AG04449 (cell line): ENCODE measurements at regions of chr17 and their contacts with region 1.

Region 1: GRCh38 chr17:48307814-48308411 is 122.1 kb downstream of the SKAP1 start:
- DNase-seq: peak; percentile 17
- H3K4me3 ChIP-seq: no peak overlapping the region
- CTCF ChIP-seq: peak; percentile 85

Region 2: DNA sequence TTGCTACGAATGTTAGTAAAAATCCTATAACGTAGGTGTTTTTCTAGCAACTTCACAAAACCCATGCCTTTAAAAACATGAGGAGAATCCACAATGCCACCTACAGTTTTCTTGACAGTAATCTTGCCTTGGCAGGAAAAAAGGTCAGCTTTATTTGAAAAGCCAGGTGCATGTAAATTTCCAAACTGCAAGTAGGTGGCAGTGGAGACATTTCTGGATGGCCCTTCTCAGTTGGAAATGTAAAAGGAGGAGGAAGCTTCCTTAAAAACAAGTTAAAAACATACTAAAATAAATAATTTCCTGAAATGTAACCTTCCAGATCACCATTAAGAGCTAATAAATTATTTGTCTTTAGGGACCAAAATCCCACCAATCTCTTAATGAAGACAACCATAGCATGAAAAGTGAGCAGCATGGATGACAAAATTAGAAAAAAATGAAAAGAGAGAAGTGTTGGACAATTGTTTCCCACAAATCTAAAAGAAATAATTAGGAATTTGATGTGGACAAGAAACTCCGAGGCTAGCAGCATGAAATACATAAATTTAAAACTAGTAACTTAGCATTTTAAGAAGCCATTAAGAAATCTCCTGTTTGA is 48.1 kb before region 1 on chr17:
- CTCF ChIA-PET with region 1: interaction called, 13 read pairs
- POLR2A ChIA-PET with region 1: no interaction called
- DNase-seq: no peak
- H3K4me3 ChIP-seq: no peak overlapping the region
- CTCF ChIP-seq: peak; percentile 43

Region 3: DNA sequence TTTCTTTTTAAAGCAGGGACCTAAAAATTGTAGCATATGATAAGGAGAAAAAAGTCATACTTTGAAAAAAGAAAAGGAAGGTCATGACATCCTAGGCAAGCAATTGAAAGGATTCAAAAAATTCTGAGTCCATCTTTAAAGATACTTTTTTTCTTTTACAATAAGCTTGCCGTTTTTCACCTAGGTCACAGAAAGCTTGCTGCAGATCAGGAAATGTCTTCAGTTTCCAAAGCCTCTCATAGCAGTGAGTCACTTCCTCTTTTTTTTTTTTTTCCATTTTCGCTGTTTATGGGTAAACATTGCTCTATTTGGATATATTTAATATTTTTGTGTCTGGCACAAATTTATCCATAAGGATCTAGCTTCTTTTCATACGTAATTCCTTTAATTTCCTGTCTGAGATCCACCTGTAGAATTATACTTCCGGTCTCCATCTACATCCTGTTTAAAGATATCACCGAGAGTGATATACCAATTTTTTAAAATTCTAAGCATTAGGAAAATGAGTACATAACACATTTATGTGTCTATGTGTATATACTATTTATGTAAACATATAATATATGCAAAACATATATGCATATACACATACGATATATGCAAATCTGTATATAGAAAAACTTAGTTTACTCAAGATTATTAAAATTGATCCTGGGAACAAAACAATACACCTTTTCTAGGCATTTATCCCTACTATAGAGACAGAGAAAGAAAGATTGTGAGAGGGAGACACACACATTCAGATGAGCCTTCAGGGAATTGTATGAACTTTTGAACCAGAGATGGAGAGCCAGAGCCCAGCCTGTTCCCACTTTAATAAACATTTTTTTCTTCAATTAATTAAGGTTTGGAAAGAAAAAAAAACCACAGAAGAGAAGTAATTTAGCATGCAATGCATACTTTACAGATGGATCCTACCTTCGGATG is 12.3 kb before region 1 on chr17:
- CTCF ChIA-PET with region 1: interaction called, 30 read pairs
- POLR2A ChIA-PET with region 1: no interaction called
- DNase-seq: no peak
- H3K4me3 ChIP-seq: no peak overlapping the region
- CTCF ChIP-seq: no peak

Region 4: DNA sequence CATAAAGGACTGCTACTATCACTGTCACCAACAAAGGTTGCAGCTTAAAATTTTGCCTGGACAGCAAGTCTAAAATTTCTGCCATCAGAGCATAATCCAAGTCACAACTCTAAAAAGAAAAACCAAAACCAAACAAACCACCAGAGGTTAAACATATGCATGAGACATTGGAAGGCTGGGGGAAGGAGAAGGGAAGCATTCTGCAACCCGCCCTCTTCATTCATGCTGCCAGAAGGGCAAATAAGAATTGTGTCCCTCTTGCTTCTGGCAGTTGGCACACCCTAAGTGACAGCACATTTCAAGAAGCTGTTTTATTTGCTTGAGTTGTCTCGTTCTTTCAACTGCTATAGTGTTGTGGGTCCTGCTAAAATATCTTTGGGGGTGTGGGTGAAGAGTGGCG is 22.5 kb after region 1 on chr17:
- CTCF ChIA-PET with region 1: interaction called, 33 read pairs
- POLR2A ChIA-PET with region 1: interaction called, 3 read pairs
- DNase-seq: no peak
- H3K4me3 ChIP-seq: no peak overlapping the region
- CTCF ChIP-seq: no peak

Region 5: DNA sequence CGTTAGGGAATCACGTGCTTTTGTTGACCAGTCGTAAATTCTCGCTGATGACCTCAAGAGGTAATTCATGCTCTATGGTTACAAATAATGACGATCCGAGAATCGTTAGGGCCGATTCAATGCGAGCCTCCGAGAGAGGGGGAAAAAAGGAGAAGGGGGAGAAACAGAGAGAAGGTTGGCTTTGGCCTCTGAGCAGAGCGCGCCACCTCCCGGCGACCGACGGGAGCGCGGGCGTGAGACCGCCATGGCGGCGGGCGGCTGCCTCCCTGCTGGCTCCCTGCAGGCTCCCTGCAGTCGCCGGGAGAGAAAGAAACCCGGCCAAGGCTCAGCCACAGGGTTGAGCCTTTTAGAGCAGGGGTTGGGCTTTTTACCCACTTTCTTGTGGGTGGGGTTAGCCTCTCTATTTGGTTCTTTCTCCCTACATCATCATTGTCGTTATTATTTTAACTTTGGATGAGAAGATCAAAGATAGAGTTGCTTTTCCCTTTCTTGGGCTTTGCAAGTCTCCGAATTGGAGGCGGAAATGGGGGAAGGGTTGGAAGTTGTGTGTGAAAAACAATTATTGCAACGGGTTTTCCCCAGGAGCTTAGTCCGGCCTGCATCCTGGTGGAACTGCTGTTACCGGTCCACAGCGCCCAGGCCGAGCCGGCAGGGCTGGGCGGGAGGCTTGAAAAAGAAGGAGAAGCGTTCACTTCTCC is 286.1 kb after region 1 on chr17:
- CTCF ChIA-PET with region 1: interaction called, 21 read pairs
- POLR2A ChIA-PET with region 1: no interaction called
- DNase-seq: peak; percentile 63
- H3K4me3 ChIP-seq: peak overlapping the region; percentile 76
- CTCF ChIP-seq: peak; percentile 99

Region 6: DNA sequence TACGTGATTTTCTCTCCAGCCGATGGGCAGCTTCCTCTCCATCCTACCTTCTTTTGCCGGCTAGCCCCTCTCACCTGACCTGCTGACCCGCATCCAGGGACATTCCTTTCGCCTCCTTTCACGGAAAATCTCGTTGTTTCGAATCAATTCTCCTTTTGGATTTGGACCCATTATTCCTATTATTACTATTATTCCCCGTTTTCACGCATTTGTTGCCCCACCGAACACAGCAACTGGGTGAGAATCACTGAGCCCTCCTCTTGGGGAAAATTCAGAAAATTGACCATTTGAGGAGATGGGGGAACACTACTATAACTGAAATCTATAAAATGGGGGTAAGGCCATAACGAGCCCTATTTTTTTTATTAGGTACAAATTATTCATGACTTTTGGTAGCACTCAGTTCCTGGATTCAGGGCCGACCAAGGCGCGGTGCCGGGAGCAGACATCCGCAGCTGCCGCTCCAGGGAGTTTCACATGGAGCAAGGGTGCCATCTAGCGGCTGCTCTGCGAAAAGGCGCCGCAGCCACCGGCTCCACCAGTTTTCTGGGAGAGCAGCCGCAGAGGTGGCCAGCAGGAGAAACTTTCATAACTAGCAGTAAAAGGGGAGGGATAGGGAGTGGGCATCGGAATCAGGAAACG is 310.5 kb after region 1 on chr17:
- CTCF ChIA-PET with region 1: interaction called, 119 read pairs
- POLR2A ChIA-PET with region 1: no interaction called
- DNase-seq: no peak
- H3K4me3 ChIP-seq: peak overlapping the region; percentile 29
- CTCF ChIP-seq: peak; percentile 88